ENCODE measurements at regions of chr19 and their contacts with region 1.

Region 1: DNA sequence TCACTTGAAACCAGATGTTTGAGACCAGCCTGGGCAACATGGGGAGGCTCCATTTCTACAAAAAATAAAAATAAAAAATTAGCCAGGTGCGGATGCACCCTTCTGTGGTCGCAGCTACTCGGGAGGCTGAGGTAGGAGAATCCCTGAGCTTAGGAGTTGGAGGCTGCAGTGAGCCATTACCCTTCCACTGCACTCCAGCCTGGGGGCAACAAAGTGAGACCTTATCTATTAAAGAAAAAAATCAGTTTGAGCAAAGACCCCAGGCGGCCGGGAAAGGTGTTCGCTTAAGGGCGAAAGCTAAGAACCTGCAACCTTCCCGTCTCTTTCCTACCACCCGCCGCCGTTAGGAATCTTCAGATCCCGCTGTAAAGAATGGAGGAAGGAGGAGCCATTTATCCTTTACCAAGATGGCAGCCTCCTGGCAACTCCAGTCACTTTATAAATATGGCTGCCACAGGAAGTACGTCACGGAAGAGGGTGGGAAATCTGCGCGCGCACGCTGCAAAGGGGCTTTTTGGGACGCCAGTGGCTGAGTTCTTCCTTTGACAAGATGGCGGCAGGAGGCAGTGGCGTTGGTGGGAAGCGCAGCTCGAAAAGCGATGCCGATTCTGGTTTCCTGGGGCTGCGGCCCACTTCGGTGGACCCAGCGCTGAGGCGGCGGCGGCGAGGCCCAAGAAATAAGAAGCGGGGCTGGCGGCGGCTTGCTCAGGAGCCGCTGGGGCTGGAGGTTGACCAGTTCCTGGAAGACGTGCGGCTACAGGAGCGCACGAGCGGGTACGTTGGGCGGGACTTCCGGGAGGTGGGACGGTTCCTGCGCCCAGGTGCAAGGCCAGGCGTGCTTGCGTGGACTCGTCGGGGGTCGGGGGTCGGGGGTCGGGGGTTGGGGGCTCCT is at the start of gene NOP53:
- DNase-seq: peak; percentile 96
- ATAC-seq: peak; percentile 46
- H3K4me3 ChIP-seq: peak within 1 kb of the TSS; percentile 72
- H3K27ac ChIP-seq: peak within 1 kb of the TSS; percentile 89
- H3K4me1 ChIP-seq: peaks cover 9% of the 10 kb centered on the region
- H3K27me3 ChIP-seq: no peaks in the 10 kb centered on the region
- CTCF ChIP-seq: no peak
- POLR2A ChIP-seq: peak; percentile 90
- RAD21 ChIP-seq: no peak
- total RNA-seq, gene NOP53: 57.2 and 59.5 TPM in 2 replicates

Region 2: GRCh38 chr19:47663841-47664771 is 81.2 kb before region 1 on chr19:
- CTCF ChIA-PET with region 1: no interaction called
- POLR2A ChIA-PET with region 1: no interaction called
- dilution Hi-C with region 1: no loop called
- in situ Hi-C with region 1: no loop called
- intact Hi-C with region 1: loop called (anchors 1 kb)
- DNase-seq: peak; percentile 99
- ATAC-seq: peak; percentile 80
- H3K4me3 ChIP-seq: no peak overlapping the region; the same call in 1 of the 2 replicates
- H3K27ac ChIP-seq: peak overlapping the region; percentile 83
- H3K4me1 ChIP-seq: peaks cover 35% of the 10 kb centered on the region
- H3K27me3 ChIP-seq: no peaks in the 10 kb centered on the region
- CTCF ChIP-seq: no peak
- POLR2A ChIP-seq: no peak
- RAD21 ChIP-seq: peak; percentile 17; the same call in 1 of the 2 replicates

Region 3: GRCh38 chr19:47713046-47714021 is 31.9 kb before region 1 on chr19 and contains the start of gene EHD2:
- CTCF ChIA-PET with region 1: interaction called, 16 read pairs
- POLR2A ChIA-PET with region 1: interaction called, 8 read pairs
- dilution Hi-C with region 1: no loop called
- in situ Hi-C with region 1: loop called (anchors 5 kb)
- intact Hi-C with region 1: loop called (anchors 1 kb)
- DNase-seq: peak; percentile 76
- ATAC-seq: peak; percentile 92
- H3K4me3 ChIP-seq: peak within 1 kb of the TSS; percentile 90
- H3K27ac ChIP-seq: peak within 1 kb of the TSS; percentile 98
- H3K4me1 ChIP-seq: peaks cover 15% of the 10 kb centered on the region
- H3K27me3 ChIP-seq: no peaks in the 10 kb centered on the region
- CTCF ChIP-seq: peak; percentile 97
- POLR2A ChIP-seq: peak; percentile 93
- RAD21 ChIP-seq: peak; percentile 95
- total RNA-seq, gene EHD2: 31.9 and 35.3 TPM in 2 replicates

Region 4: GRCh38 chr19:47719047-47719859 is 26.0 kb before region 1 on chr19:
- CTCF ChIA-PET with region 1: interaction called, 16 read pairs
- POLR2A ChIA-PET with region 1: interaction called, 9 read pairs
- dilution Hi-C with region 1: no loop called
- in situ Hi-C with region 1: loop called (anchors 5 kb)
- intact Hi-C with region 1: loop called (anchors 1 kb)
- DNase-seq: peak; percentile 99
- ATAC-seq: peak; percentile 85
- H3K4me3 ChIP-seq: 0 out of 2 replicates have a peak overlapping the region, but pooled peaks have one; percentile 7
- H3K27ac ChIP-seq: peak overlapping the region; percentile 97
- H3K4me1 ChIP-seq: peaks cover 39% of the 10 kb centered on the region
- H3K27me3 ChIP-seq: no peaks in the 10 kb centered on the region
- CTCF ChIP-seq: no peak
- POLR2A ChIP-seq: no peak
- RAD21 ChIP-seq: peak; percentile 26; the same call in 1 of the 2 replicates

Measured in IMR-90 (cell line).